ENCODE measurements at regions of chr12 and their contacts with region 1.

Region 1: GRCh38 chr12:113766879-113767878 is 198.9 kb downstream of the RBM19 start:
- DNase-seq: no peak
- ATAC-seq: no peak

Region 2: DNA sequence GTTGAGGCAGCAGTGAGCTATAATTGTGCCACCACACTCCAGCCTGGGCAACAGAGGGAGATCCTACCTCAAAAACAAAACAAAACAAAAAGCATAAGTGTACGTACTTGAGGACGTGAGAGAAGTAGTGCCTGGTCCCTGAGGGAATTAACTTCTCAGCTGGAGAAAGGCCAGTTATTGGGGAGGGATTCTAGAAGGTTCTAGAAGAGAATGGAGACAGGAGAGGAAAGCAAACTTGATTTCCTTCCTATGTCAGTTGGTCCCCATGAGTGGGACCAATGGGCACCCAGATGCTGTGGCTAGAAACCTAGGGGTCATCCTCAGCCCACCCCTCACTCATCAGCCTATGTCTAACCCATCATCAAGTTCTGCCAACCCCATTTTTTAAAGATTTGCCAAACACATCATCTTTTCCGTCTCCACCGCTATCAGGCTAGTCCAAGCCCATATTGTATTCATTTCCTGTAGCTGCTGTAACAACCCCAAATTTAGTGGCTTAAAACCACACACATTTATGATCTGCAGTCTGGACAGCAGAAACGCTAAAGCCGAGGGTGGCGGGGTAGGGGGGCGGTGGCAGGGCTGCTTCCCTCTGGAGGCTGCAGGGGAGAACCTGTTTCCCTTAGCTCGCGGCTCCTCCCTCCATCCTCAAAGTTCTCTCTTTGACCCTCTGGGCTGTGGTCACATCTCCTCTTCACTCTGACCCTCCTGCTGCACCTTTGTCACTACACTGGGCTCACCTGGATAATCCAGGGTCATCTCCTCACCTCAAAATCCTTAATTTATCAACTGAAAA is 206.1 kb after region 1 on chr12:
- intact Hi-C with region 1: no loop called
- DNase-seq: no peak
- ATAC-seq: no peak

Region 3: GRCh38 chr12:114499338-114499737 is 732.2 kb after region 1 on chr12:
- intact Hi-C with region 1: loop called (anchors 5 kb)
- DNase-seq: no peak
- ATAC-seq: no peak

Measured in sciatic nerve (tissue), 2 donors.